Breast epithelium (tissue), 4 donors: ENCODE measurements at regions of chr13 and their contacts with region 1.

Region 1: GRCh38 chr13:27857282-27857681 is 62.5 kb upstream of the PDX1 start:
- DNase-seq: no peak
- H3K4me3 ChIP-seq: no peak overlapping the region
- H3K27ac ChIP-seq: no peak overlapping the region
- H3K4me1 ChIP-seq: no peaks in the 10 kb centered on the region
- H3K27me3 ChIP-seq: peaks cover 0 to 73% of the 10 kb centered on the region in 2 donors
- CTCF ChIP-seq: no peak
- POLR2A ChIP-seq: no peak

Region 2: GRCh38 chr13:28110414-28110813 is 253.1 kb after region 1 on chr13:
- intact Hi-C with region 1: no loop called
- DNase-seq: no peak
- H3K4me3 ChIP-seq: no peak overlapping the region
- H3K27ac ChIP-seq: no peak overlapping the region
- H3K4me1 ChIP-seq: no peaks in the 10 kb centered on the region
- H3K27me3 ChIP-seq: no peaks in the 10 kb centered on the region
- CTCF ChIP-seq: no peak
- POLR2A ChIP-seq: no peak

Region 3: DNA sequence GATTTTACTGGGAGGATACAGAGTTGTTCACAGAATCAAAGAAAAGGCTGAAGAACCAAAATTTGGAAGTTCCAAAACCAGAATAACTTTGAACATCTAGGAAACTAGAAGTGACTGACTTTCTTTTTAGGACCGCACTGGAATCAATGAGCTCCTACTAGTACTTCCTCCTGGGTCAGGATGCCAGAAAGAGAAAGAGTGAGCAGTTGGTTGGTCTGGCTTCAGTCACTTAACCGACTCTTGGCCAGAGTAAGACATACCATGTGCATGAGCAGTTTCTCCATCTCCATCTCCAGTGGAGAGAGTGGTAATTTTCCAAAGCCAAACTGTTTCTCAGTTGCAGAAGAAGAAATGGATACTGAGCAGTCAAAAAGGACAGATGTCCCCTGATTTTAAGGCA is 935.7 kb after region 1 on chr13:
- intact Hi-C with region 1: loop called (anchors 5 kb)
- DNase-seq: no peak
- H3K4me3 ChIP-seq: no peak overlapping the region
- H3K27ac ChIP-seq: no peak overlapping the region
- H3K4me1 ChIP-seq: no peaks in the 10 kb centered on the region
- H3K27me3 ChIP-seq: no peaks in the 10 kb centered on the region
- CTCF ChIP-seq: no peak
- POLR2A ChIP-seq: no peak